Endothelial cell of umbilical vein (primary cell): ENCODE measurements at regions of chr14 and their contacts with region 1.

Region 1: DNA sequence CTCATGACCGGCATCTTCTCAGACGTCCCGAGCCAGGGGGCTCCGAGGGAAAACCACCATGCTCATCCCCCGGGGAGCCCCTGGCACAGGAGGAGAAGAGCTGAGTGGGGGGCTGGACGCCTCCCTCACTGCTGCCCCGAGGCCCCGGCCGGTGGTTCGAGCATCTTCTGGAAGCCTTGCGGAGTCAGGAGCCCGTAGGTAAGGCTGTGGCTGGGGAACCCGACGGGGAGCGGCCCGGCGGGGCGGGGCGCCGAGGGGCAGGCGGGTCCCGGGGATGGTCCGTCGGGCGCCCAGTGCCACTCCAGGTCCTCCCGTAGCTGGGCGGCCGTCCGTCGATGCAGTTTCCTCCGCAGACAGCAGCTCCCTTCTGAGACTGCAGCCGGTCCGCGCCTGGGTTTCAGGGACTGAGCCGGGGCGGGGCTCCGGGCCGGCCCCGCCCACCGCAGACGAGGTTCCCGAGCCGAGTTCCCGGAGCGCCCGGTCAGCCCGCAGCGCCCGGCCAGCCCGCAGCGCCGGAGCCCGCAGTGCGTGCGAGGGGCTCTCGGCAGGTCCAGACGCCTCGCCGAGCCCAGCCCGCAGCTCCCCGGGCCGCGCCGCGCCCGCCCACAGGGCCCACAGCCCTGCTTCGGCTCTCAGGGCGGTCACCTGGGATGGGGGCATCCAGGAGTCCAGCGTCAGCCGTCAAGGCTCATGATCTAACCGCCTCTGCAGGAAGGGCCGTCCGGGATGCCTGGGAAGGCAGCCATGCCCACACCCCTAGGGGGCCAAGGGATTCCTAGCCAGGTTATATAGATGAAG is at the start of gene PGF:
- DNase-seq: peak; percentile 72
- H3K4me3 ChIP-seq: peak within 1 kb of the TSS; percentile 83 to 94 (median 84)
- H3K27ac ChIP-seq: peak within 1 kb of the TSS; percentile 71
- H3K4me1 ChIP-seq: peaks cover 42% of the 10 kb centered on the region
- H3K27me3 ChIP-seq: no peaks in the 10 kb centered on the region
- CTCF ChIP-seq: peak in 1 of 2 donors; percentile 1
- POLR2A ChIP-seq: peak; percentile 99
- total RNA-seq, gene PGF: 206 and 254 TPM in 2 replicates

Region 2: DNA sequence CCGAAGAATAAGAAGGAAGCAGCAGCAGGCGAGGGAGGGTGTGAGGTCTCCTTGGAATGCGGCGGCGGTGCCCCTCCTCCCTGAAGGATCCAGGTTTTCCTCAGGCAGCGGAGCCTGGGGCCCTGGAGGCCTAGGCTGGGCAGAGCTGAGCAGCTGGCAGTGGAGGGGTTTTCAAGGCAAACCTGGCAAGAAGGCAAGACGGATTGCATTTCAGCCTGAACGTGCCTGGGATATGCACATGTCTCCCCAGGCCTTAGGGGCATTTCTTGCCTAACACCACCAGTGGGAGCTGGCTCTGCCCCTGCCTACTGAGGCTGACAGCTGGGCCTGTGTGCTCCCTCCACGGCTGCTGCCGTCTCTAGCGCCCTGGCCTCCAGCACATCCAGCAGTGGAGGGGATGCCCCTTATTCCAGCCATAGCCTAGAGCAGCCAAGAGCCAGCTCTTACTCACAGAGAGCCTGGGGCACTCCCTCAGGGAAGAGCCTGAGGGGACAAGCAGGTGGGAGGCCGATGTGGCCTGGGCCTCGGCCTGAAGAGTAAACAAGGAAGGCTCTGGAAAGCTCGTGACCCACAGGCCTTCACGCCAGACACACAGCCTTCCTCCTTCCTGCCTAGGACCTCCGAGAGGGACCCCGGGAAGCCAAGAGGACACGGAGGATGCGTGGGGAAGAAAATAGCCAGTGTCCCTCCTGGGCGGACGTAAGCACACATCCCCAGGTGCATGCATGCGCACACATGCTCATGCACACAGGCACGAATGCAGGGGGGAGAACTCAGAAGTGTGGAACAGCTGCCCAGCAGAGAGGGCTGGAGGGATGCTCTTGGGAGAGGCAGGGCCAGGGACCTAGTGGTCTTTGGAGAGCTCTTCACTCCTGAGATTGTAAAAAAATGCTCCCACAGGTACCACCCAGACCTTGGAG is 24.3 kb after region 1 on chr14:
- CTCF ChIA-PET with region 1: interaction called, 5 read pairs
- POLR2A ChIA-PET with region 1: interaction called, 19 read pairs
- dilution Hi-C with region 1: no loop called
- intact Hi-C with region 1: loop called (anchors 1 kb)
- DNase-seq: peak; percentile 57
- H3K4me3 ChIP-seq: no peak overlapping the region
- H3K27ac ChIP-seq: peak overlapping the region; percentile 98
- H3K4me1 ChIP-seq: peaks cover 53% of the 10 kb centered on the region
- H3K27me3 ChIP-seq: no peaks in the 10 kb centered on the region
- CTCF ChIP-seq: peak in 1 of 2 donors; percentile 39
- POLR2A ChIP-seq: no peak

Region 3: GRCh38 chr14:75002392-75003249 is 47.2 kb after region 1 on chr14 and contains the start of gene EIF2B2:
- CTCF ChIA-PET with region 1: interaction called, 12 read pairs
- POLR2A ChIA-PET with region 1: interaction called, 7 read pairs
- dilution Hi-C with region 1: no loop called
- intact Hi-C with region 1: loop called (anchors 2 kb)
- DNase-seq: peak; percentile 96
- H3K4me3 ChIP-seq: peak within 1 kb of the TSS; percentile 43 to 76 (median 59)
- H3K27ac ChIP-seq: peak within 1 kb of the TSS; percentile 64
- H3K4me1 ChIP-seq: peaks cover 26% of the 10 kb centered on the region
- H3K27me3 ChIP-seq: no peaks in the 10 kb centered on the region
- CTCF ChIP-seq: no peak
- POLR2A ChIP-seq: peak; percentile 55
- total RNA-seq, gene EIF2B2: 97.0 and 103 TPM in 2 replicates

Region 4: GRCh38 chr14:75022655-75023054 is 67.2 kb after region 1 on chr14:
- CTCF ChIA-PET with region 1: interaction called, 10 read pairs
- POLR2A ChIA-PET with region 1: interaction called, 5 read pairs
- dilution Hi-C with region 1: no loop called
- intact Hi-C with region 1: no loop called
- DNase-seq: peak; percentile 13
- H3K4me3 ChIP-seq: no peak overlapping the region
- H3K27ac ChIP-seq: no peak overlapping the region
- H3K4me1 ChIP-seq: peaks cover 20% of the 10 kb centered on the region
- H3K27me3 ChIP-seq: no peaks in the 10 kb centered on the region
- CTCF ChIP-seq: peak; percentile 33 to 53
- POLR2A ChIP-seq: no peak